GM12878 (cell line): ENCODE measurements at regions of chr19 and their contacts with region 1.

Region 1: DNA sequence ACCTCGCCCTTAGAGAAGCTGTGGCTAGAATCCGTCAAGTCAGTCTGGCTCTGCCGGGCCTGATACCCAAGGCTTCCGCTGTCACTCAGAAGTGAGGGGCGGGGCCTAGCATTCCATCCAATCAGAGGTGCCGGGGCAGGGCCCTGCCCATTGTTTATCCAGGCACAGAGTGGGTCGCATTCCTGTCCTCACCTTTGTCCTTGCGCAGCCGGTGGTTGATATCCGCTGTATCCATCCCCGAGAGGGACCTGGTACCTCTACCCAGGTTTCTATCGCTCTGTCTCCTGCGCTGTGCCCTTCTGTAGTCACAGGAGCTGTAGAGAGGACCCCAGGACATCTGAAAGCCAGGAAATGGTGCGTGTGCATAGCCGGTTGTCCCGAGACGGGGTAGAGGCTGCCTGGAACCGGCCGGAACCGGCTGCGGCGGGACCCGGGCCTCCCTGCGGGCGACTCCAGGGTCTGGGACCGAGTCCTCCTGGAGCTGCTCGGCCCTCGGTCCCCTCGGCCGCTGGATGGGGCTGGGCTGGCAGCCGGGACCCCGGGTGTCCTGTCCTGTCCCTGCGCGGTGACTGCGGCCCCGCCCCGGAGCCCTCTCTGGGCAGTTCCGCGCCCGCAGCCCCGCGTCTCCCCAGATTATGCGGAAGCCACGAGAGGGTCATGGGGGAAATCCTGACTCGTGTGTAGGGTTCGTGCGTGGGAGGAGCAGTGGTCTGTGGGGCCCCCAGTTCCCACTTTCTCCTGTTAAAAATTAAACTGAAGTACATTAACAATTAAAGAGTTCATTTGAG is at the start of gene ZNF763:
- DNase-seq: peak; percentile 79
- ATAC-seq: peak; percentile 97
- H3K4me3 ChIP-seq: peak within 1 kb of the TSS; percentile 70
- H3K27ac ChIP-seq: peak within 1 kb of the TSS; percentile 94
- H3K4me1 ChIP-seq: peaks cover 7% of the 10 kb centered on the region
- H3K27me3 ChIP-seq: no peaks in the 10 kb centered on the region
- CTCF ChIP-seq: no peak
- EP300 ChIP-seq: peak; percentile 48 to 63; a peak in 2 of 4 replicates
- POLR2A ChIP-seq: peak; percentile 82
- RAD21 ChIP-seq: no peak
- polyA plus RNA-seq, gene ZNF763: 0.86 to 0.89 TPM

Region 2: GRCh38 chr19:12052497-12053169 is 87.6 kb after region 1 on chr19 and contains the start of gene ZNF878:
- CTCF ChIA-PET with region 1: interaction called, 15 read pairs
- POLR2A ChIA-PET with region 1: interaction called, 3 read pairs
- RAD21 ChIA-PET with region 1: interaction called, 9 read pairs
- SMC1A ChIA-PET with region 1: interaction called, 7 read pairs
- in situ Hi-C with region 1: no loop called
- intact Hi-C with region 1: no loop called
- DNase-seq: peak; percentile 67
- ATAC-seq: peak; percentile 96
- H3K4me3 ChIP-seq: peak within 1 kb of the TSS; percentile 86
- H3K27ac ChIP-seq: peak within 1 kb of the TSS; percentile 67
- H3K4me1 ChIP-seq: no peaks in the 10 kb centered on the region
- H3K27me3 ChIP-seq: no peaks in the 10 kb centered on the region
- CTCF ChIP-seq: peak; percentile 12 to 26 (median 18); a peak in 3 of 6 replicates
- EP300 ChIP-seq: no peak
- POLR2A ChIP-seq: peak; percentile 92
- RAD21 ChIP-seq: no peak
- polyA plus RNA-seq, gene ZNF878: 0.24 to 0.79 TPM

Region 3: GRCh38 chr19:12064590-12065538 is 99.8 kb after region 1 on chr19 and contains the start of gene ZNF844:
- CTCF ChIA-PET with region 1: interaction called, 21 read pairs
- POLR2A ChIA-PET with region 1: interaction called, 3 read pairs
- RAD21 ChIA-PET with region 1: interaction called, 16 read pairs
- SMC1A ChIA-PET with region 1: interaction called, 3 read pairs
- in situ Hi-C with region 1: no loop called
- intact Hi-C with region 1: no loop called
- DNase-seq: peak; percentile 48
- ATAC-seq: peak; percentile 20; the same call in 1 of the 3 replicates
- H3K4me3 ChIP-seq: peak within 1 kb of the TSS; percentile 64
- H3K27ac ChIP-seq: peak within 1 kb of the TSS; percentile 86
- H3K4me1 ChIP-seq: no peaks in the 10 kb centered on the region
- H3K27me3 ChIP-seq: no peaks in the 10 kb centered on the region
- CTCF ChIP-seq: no peak
- EP300 ChIP-seq: no peak
- POLR2A ChIP-seq: peak; percentile 97
- RAD21 ChIP-seq: no peak
- polyA plus RNA-seq, gene ZNF844: 0.16 to 0.26 TPM

Region 4: DNA sequence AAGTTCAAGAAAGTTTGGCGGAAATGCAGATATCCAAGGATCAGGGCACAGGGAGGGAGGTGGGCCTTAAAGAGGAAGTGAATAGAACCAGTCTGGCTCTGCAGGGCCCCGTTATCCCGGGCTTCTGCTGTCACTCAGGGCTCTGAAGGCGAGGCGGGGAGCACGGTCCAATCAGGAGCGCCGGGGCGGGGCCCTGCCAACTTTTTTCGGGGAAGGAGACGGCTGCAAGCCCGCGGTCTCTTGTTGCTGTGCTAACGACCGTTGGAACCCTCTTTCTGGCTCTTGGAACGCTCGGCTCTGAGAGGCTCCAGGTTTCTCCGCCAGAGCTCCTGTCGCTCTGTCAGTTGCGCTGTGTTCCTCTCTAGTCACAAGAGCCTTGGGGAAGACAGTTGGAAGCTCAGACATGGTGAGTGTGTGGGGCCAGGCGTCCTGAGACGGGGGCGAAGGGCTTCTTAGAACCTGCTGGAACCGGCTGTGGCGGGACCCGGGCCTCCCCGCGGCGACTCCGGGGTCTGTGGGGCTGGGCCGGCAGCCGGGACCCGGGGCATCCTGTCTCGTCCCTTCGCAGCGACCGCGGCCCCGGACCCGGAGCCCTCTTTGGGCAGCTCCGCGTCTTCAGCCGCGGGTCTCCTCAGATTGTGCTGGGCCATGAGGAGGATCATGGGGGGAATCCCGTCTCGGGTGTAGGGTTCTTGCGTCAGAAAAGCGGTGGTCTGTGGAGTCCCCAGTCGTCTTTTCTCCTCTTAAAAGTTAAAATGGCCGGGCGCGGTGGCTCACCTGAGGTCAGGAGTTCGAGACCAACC is 127.2 kb after region 1 on chr19:
- CTCF ChIA-PET with region 1: interaction called, 11 read pairs
- POLR2A ChIA-PET with region 1: no interaction called
- RAD21 ChIA-PET with region 1: no interaction called
- SMC1A ChIA-PET with region 1: interaction called, 4 read pairs
- in situ Hi-C with region 1: no loop called
- intact Hi-C with region 1: no loop called
- DNase-seq: peak; percentile 16
- ATAC-seq: peak; percentile 74
- H3K4me3 ChIP-seq: peak overlapping the region; percentile 52
- H3K27ac ChIP-seq: peak overlapping the region; percentile 68
- H3K4me1 ChIP-seq: no peaks in the 10 kb centered on the region
- H3K27me3 ChIP-seq: no peaks in the 10 kb centered on the region
- CTCF ChIP-seq: no peak
- EP300 ChIP-seq: no peak
- POLR2A ChIP-seq: peak; percentile 63
- RAD21 ChIP-seq: no peak